ENCODE measurements at regions of chr10 and their contacts with region 1.

Region 1: DNA sequence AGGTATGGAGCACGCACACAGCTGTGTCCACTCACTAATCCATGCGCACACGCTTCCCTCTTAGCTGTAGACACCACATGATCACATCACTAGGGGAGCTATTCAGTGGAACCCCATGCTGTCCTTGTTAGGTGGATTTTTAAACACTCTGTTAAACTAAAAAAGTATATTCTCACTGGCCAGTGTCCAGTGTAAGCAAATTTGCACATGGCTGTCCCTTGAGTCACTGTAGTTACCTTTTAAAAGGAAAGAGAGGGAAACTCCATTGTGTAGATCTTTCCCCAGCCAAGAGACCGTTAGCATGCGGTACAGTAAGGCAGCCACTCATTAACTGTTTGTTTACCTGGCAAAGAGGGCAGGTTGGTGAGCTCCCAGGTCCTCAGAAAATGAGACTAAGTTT is 81.6 kb upstream of the INSYN2A start:
- DNase-seq: no peak
- ATAC-seq: no peak
- H3K4me3 ChIP-seq: no peak overlapping the region
- H3K4me3 Mint-ChIP-seq: no peak overlapping the region
- H3K27ac ChIP-seq: no peak overlapping the region
- H3K27ac Mint-ChIP-seq: no peak overlapping the region
- H3K4me1 ChIP-seq: peaks cover 0 to 6% of the 10 kb centered on the region in 2 experiments
- H3K4me1 Mint-ChIP-seq: peaks cover 2 to 9% (median 8%) of the 10 kb centered on the region in 3 donors
- H3K27me3 ChIP-seq: peaks cover 0 to 12% of the 10 kb centered on the region in 2 experiments
- H3K27me3 Mint-ChIP-seq: peaks cover 3 to 31% of the 10 kb centered on the region in 2 donors

Region 2: DNA sequence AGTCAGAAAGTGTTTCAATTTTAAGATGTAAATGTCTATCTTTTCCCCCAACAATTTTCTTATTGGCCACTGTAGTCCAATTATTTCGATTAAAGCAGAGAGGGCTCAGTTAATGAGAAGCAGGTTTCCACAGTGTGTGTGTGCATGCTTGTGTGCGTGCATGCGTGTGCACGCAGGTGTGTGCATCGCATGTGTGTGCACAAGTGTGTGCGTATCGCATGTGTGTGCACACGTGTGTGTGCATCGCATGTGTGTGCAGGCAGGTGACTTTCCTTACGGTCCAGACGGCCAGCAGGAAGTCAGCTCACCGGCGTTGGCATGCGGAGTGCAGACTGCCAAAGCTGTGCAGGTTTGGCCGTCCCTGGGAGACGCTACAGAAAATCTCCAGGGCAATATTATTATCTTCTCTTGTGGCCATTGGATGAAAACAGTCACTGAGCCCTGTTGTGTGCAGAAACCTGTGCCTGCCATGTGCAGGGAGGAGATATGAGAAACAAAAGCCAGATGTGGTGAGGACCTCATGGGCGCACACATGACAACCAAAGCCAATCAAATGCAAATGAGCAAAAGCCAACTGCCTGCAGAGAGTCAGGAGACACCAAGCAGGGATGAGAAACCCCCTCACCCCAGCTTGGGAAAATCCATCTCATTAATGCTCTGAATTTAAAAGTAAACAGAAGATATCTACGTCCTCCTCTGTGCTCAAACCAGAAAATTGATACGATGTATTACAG is 677.9 kb before region 1 on chr10:
- CTCF ChIA-PET with region 1: no interaction called
- POLR2A ChIA-PET with region 1: no interaction called
- DNase-seq: no peak
- ATAC-seq: no peak
- H3K4me3 ChIP-seq: no peak overlapping the region
- H3K4me3 Mint-ChIP-seq: no peak overlapping the region
- H3K27ac ChIP-seq: no peak overlapping the region
- H3K27ac Mint-ChIP-seq: no peak overlapping the region
- H3K4me1 ChIP-seq: no peaks in the 10 kb centered on the region
- H3K4me1 Mint-ChIP-seq: no peaks in the 10 kb centered on the region
- H3K27me3 ChIP-seq: peaks cover 3 to 7% of the 10 kb centered on the region in 2 experiments
- H3K27me3 Mint-ChIP-seq: peaks cover 1 to 4% of the 10 kb centered on the region in 2 donors

Region 3: GRCh38 chr10:127347202-127347959 is 69.4 kb after region 1 on chr10:
- CTCF ChIA-PET with region 1: no interaction called
- POLR2A ChIA-PET with region 1: interaction called in 1 of 2 experiments, 19 read pairs
- DNase-seq: peak in 1 of 35 experiments; percentile 10
- ATAC-seq: no peak
- H3K4me3 ChIP-seq: no peak overlapping the region
- H3K4me3 Mint-ChIP-seq: no peak overlapping the region
- H3K27ac ChIP-seq: no peak overlapping the region
- H3K27ac Mint-ChIP-seq: no peak overlapping the region
- H3K4me1 ChIP-seq: no peaks in the 10 kb centered on the region
- H3K4me1 Mint-ChIP-seq: no peaks in the 10 kb centered on the region
- H3K27me3 ChIP-seq: peaks cover 0 to 23% of the 10 kb centered on the region in 2 experiments
- H3K27me3 Mint-ChIP-seq: peaks cover 0 to 8% of the 10 kb centered on the region in 2 donors